Ascending aorta (tissue), 2 donors: ENCODE measurements at regions of chr7 and their contacts with region 1.

Region 1: DNA sequence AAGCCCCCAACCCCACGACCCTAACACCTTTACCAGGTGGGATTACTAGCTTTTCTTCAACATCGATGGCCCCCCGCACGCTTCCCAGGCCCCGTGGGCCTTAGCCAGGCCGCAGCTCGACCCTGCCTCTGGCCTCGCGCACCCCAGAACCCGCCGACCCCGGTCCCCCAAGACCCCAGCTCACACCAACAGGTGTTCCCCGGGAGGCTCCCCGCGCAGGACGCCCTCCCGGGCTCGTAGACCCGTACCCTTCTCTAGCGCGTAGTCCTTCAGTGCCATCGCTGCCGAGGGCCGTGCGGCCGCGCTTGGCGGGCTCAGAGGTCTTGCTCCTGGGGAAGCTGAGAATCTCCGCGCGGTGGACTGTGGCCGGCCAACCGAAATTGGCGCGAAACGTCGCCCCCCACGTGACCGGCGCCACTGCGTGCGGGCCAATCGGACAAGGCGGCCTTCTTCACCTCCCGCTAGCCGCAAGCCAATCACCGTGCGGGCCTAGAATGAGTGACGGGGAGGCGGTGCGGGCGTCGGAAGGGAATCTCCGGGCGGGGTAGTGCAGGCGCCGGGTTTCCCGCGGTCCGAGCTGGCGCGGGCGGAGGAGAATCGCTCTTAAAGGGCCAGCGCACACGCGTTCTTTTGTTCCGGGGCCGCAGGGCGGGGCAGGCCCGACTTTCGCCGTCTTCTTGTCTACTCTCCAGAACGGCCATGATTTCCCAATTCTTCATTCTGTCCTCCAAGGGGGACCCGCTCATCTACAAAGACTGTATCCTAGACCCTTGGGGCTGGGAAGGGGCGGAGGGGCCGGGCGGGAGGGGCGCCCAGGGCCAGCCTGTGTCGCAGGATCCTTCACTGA is at the starts of genes AP4M1 and MCM7:
- DNase-seq: peak; percentile 93 to 99
- H3K4me3 ChIP-seq: peak within 1 kb of the TSS; percentile 87
- H3K27ac ChIP-seq: peak within 1 kb of the TSS; percentile 93 to 95
- H3K4me1 ChIP-seq: peaks cover 4 to 15% of the 10 kb centered on the region in 2 donors
- H3K27me3 ChIP-seq: no peaks in the 10 kb centered on the region
- CTCF ChIP-seq: no peak
- total RNA-seq, gene AP4M1: 29.6 TPM
- total RNA-seq, gene MCM7: 52.2 TPM

Region 2: DNA sequence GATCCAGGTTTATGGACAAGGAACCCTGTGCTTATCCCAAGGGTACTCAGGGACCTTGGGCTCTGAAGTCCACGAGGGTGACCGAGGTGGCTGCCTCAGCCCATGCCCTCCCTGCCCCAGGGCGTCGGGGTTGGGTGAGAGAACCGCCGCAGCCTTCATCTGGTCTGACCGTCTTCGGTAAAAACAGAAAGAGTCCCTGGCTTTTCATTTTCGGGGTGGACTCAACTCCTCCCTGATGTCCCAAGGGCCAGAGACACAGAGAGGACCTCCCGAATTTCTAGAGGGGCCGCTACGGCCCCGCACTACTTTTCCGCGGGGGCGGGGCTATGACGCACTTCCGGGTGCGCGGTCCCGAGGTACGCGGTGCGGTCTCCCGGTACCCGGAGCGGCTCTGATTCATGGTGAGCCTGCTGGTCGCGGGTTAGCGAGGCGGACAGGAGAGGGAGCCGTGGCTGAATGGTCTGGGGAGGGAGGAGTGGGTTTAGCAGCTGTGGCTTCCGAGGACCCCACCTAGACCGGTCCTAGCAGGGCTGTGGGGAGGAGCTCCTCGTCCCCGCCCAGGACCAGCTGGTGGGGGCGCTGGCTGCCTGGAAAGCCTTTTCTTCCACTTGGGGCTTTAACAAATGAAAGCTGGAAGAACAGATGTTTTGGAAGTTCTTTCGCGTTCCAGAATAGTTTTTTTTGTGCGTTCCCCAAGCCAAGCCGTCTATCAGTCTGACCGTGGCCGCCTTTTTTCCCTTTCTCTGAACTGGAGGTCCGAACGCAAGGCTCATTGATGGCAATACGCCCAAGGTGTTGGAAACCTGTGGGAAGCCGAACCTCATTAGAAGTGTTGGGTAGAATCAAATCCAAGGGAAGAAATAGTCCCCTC is 51.6 kb before region 1 on chr7 and contains the start of gene ZSCAN21:
- intact Hi-C with region 1: loop called (anchors 1 kb)
- DNase-seq: peak; percentile 57 to 93
- H3K4me3 ChIP-seq: peak within 1 kb of the TSS; percentile 65 to 88
- H3K27ac ChIP-seq: peak within 1 kb of the TSS; percentile 87 to 97
- H3K4me1 ChIP-seq: peaks cover 5 to 9% of the 10 kb centered on the region in 2 donors
- H3K27me3 ChIP-seq: no peaks in the 10 kb centered on the region
- CTCF ChIP-seq: peak in 2 of 3 experiments; percentile 23 to 29
- total RNA-seq, gene ZSCAN21: 58.5 TPM

Region 3: DNA sequence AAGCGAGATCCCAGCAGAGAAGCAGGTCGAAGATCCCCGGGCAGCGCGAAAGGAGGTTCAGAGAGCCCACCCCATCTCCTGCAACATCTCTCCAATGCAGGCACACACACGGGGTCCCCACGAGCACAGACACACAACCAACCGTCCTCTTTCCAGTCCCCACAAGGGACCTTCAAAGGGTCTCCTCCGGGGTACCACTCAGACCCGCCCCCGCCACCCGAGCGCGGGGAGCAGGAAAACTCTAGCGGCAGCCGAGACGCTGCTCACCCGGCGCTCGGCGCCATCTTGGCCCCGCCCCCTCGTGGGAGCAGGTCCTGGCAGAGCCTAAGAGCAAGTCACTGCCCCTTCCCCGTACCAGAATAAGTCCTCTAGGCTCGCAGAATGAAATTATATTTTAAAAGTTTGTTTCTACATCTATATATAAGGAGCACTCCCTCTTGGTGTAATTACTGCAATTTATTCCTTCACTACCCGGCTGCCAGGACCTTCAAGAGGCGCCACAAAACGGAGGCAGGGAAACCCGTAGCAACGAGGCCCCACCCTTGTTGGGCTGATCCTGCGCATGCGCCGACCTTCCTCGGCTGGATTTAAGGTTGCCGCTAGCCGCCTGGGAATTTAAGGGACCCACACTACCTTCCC is 17.9 kb after region 1 on chr7 and contains the starts of genes CNPY4 and TAF6:
- intact Hi-C with region 1: loop called (anchors 1 kb)
- DNase-seq: peak; percentile 81 to 96
- H3K4me3 ChIP-seq: peak within 1 kb of the TSS; percentile 70 to 84
- H3K27ac ChIP-seq: peak within 1 kb of the TSS; percentile 86 to 93
- H3K4me1 ChIP-seq: peaks cover 0 to 9% of the 10 kb centered on the region in 2 donors
- H3K27me3 ChIP-seq: no peaks in the 10 kb centered on the region
- CTCF ChIP-seq: peak in 1 of 3 experiments; percentile 8
- total RNA-seq, gene CNPY4: 1.4 TPM
- total RNA-seq, gene TAF6: 103 TPM

Region 4: DNA sequence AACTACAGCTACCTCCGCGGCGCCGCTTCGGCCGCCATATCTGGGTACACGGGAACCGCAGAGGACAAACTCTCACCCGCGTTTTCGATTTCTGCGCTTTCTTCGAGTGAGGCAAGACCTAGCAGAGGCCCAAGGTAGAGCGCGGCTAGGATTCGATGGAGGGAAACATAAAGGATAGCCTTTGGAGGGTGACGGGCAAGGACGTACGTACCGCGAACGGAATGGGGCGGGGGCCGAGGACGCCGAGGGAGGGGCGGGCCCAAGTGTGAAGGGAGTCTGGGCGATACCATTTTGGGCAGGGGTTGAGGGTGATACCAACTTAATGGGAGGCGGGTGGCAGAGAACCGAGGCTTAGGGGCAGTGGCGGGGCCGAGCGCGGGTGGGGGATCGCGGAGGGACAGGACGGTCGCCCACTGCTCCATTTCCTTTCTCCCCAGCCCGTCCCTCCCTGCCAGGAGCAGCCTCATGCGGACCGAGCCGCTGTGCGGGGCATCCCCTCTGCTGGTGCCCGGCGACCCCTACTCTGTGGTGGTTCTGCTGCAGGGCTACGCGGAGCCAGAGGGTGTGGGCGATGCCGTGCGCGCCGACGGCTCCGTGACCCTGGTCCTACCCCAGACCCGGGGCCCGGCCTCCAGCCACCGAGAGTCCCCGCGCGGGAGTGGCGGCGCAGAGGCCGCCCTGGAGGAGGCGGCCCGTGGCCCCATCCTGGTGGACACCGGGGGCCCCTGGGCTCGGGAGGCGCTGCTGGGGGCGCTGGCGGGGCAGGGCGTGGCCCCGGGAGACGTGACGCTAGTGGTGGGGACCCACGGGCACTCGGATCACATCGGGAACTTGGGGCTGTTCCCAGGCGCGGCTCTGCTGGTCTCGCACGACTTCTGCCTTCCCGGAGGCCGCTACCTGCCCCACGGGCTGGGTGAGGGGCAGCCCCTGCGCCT is 26.0 kb after region 1 on chr7 and contains the start of gene MBLAC1:
- intact Hi-C with region 1: loop called (anchors 1 kb)
- DNase-seq: peak; percentile 26 to 91
- H3K4me3 ChIP-seq: peak within 1 kb of the TSS; percentile 79 to 99
- H3K27ac ChIP-seq: peak within 1 kb of the TSS; percentile 87 to 98
- H3K4me1 ChIP-seq: peaks cover 0 to 14% of the 10 kb centered on the region in 2 donors
- H3K27me3 ChIP-seq: no peaks in the 10 kb centered on the region
- CTCF ChIP-seq: no peak
- total RNA-seq, gene MBLAC1: not detected

Region 5: GRCh38 chr7:100177045-100178001 is 76.1 kb after region 1 on chr7 and contains the starts of genes GPC2 and STAG3:
- intact Hi-C with region 1: loop called (anchors 2 kb)
- DNase-seq: peak; percentile 83 to 97
- H3K4me3 ChIP-seq: peak within 1 kb of the TSS; percentile 53 to 64
- H3K27ac ChIP-seq: no peak within 1 kb of the TSS
- H3K4me1 ChIP-seq: peaks cover 5 to 12% of the 10 kb centered on the region in 2 donors
- H3K27me3 ChIP-seq: no peaks in the 10 kb centered on the region
- CTCF ChIP-seq: no peak
- total RNA-seq, gene GPC2: not detected
- total RNA-seq, gene STAG3: not detected